Aorta (tissue), 5 donors: ENCODE measurements at regions of chr18 and their contacts with region 1.

Region 1: GRCh38 chr18:48161191-48161910 is 230.9 kb upstream of the SMAD2 start:
- DNase-seq: peak; percentile 88 to 95
- ATAC-seq: peak; percentile 93
- H3K4me3 ChIP-seq: peak overlapping the region; percentile 50 to 57
- H3K27ac ChIP-seq: peak overlapping the region in 1 of 2 donors; percentile 80
- H3K4me1 ChIP-seq: no peaks in the 10 kb centered on the region
- H3K27me3 ChIP-seq: no peaks in the 10 kb centered on the region

Region 2: DNA sequence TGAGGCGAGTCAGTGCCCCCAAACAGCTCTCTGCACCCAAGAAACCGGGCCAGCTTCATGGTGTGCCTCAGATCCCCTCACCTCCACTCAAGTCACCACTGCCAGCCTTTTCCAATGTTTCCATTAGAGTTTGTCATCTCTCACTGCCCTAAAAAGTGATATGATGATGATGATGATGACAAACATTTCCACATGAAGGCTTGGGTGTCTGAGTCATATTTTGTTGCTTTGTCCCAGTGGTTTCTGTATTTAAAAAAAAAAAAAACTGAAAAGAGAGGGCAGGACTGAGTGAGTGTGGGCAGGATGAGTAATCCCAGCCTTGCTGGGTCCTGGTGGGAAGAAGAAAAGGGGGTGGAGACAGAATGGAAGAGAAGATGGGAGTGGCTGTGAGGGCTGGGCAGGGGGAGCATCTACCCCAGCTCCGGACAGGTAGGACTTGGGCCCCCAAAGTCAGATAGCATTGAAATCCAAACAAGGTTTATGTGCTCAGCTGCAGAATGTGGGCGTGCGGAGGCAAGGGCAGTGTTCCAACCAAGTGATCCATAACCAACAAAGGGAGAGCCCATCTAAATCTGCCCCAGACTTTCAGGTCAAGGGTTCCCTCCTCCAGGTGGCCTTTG is 169.2 kb after region 1 on chr18:
- intact Hi-C with region 1: loop called in 1 of 2 experiments (anchors 10 kb)
- DNase-seq: peak; percentile 55 to 73
- ATAC-seq: peak; percentile 35
- H3K4me3 ChIP-seq: no peak overlapping the region
- H3K27ac ChIP-seq: peak overlapping the region in 1 of 2 donors; percentile 68
- H3K4me1 ChIP-seq: peaks cover 0 to 11% of the 10 kb centered on the region in 2 donors
- H3K27me3 ChIP-seq: no peaks in the 10 kb centered on the region

Region 3: DNA sequence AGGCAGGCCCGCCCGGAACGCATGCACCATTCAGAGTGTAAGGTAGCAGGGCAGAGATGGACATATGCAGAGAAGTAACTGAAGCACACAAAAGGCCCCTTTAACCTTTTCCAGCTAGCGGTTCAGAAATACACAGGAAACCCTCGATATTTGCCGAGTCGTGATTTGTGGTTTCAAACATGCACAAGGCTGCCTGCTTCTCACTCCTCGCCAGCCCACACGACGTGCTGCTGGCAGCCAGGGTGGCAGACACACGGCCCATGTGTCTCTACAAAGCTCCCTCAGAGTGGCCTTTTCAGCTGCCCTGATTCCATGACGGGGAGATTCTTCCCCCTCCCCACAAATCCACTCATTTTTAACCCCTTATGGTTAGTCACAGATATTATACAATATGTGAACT is 224.2 kb after region 1 on chr18:
- intact Hi-C with region 1: no loop called
- DNase-seq: no peak
- ATAC-seq: no peak
- H3K4me3 ChIP-seq: no peak overlapping the region
- H3K27ac ChIP-seq: no peak overlapping the region
- H3K4me1 ChIP-seq: no peaks in the 10 kb centered on the region
- H3K27me3 ChIP-seq: no peaks in the 10 kb centered on the region